ENCODE measurements at regions of chr5 and their contacts with region 1.

Region 1: DNA sequence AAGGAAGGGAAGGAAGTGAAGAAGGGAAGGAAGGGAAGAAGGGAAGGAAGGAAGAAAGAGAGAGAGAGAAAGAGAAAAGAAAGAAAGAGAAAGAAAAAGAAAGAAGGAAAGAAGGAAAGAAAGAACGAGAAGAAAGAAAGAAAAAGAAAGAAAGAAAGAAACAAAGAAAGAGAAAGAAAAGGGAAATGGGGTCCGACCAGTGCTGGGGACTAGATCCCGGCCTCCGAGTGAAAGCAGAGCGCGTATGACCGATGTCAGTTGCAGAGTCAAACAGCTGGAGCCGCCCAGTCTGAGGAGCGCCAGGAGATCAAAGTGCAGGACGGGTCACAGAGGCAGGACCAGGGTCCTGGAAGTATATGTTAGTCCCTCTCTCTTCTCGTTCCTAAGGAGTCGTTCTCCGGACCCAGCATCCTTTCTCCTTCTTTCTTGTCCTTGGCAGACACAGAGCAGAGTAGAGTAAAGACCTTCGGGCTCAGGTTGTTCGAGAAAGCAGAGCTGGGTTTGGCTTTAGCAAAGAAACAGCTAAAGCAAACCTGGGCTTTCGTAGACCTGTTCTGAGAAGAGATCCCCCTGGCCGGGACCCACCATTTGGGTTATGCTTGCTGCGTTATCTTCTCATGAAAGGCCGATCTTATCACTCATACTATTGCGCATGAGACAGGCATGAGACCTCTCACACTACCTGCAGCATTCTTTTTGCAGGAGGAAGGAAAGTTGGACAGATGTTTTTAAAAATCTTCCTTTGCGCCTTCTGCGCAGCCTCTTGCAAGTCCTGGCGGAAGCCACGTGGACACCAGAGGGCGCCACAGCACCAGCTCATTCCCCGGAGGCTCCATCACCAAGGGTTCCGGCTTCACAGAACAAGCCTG is 305.2 kb upstream of the MSX2 start:
- DNase-seq: peak; percentile 87
- H3K4me3 Mint-ChIP-seq: peak overlapping the region; percentile 43
- H3K27ac Mint-ChIP-seq: no peak overlapping the region
- H3K4me1 Mint-ChIP-seq: peaks cover 13% of the 10 kb centered on the region
- H3K27me3 Mint-ChIP-seq: peaks cover 12% of the 10 kb centered on the region
- CTCF ChIP-seq: peak; percentile 93

Region 2: GRCh38 chr5:174409070-174409469 is 10.1 kb before region 1 on chr5:
- CTCF ChIA-PET with region 1: interaction called, 23 read pairs
- POLR2A ChIA-PET with region 1: interaction called, 3 read pairs
- intact Hi-C with region 1: no loop called
- DNase-seq: peak; percentile 20
- H3K4me3 Mint-ChIP-seq: no peak overlapping the region
- H3K27ac Mint-ChIP-seq: no peak overlapping the region
- H3K4me1 Mint-ChIP-seq: peaks cover 20% of the 10 kb centered on the region
- H3K27me3 Mint-ChIP-seq: peaks cover 29% of the 10 kb centered on the region
- CTCF ChIP-seq: no peak

Region 3: DNA sequence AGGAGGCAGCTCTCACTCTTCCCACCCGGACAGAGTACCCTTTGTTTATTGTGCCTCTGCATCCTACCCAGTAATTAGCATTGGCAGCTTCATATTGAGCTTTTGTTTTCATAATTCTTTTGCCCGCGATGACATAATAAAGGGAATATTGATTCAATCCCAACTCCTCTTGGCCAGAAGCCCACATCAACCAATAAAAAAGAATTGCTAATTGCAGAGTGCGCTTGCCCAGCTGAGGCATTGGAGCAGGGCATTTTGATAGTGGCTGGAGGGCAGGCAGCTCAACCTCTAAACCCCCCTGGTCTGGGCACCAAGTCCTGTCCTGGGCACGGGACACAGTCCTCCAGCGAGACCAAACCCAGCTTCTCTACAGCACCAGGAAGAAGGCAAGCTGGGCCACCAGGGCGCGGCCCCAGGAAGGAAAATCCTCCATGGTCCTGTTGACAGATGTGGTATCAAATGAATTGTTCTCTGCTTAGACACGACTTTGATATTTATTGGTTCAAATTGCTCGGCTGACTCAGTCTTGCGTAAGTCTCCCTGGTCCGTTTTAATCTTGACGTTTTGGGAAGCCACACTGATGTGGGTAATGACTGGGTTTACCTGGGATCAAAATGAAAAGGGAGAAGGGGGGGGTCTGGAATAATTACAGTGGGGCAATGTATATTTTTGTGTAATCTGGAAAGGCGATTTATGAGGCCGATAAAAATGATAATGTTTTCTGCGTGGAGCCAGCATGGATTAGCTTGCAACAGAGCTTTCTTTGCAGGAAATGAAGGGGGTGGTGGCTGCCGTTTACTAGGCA is 84.5 kb after region 1 on chr5:
- CTCF ChIA-PET with region 1: interaction called, 3 read pairs
- POLR2A ChIA-PET with region 1: no interaction called
- intact Hi-C with region 1: loop called (anchors 5 kb)
- DNase-seq: peak; percentile 93
- H3K4me3 Mint-ChIP-seq: peak overlapping the region; percentile 58
- H3K27ac Mint-ChIP-seq: peak overlapping the region; percentile 5
- H3K4me1 Mint-ChIP-seq: peaks cover 49% of the 10 kb centered on the region
- H3K27me3 Mint-ChIP-seq: no peaks in the 10 kb centered on the region
- CTCF ChIP-seq: no peak

Region 4: GRCh38 chr5:174724491-174725260 is 305.5 kb after region 1 on chr5 and contains the start of gene MSX2:
- CTCF ChIA-PET with region 1: interaction called, 10 read pairs
- POLR2A ChIA-PET with region 1: interaction called, 4 read pairs
- intact Hi-C with region 1: loop called (anchors 1 kb)
- DNase-seq: peak; percentile 96
- H3K4me3 Mint-ChIP-seq: peak within 1 kb of the TSS; percentile 86
- H3K27ac Mint-ChIP-seq: peak within 1 kb of the TSS; percentile 75
- H3K4me1 Mint-ChIP-seq: peaks cover 17% of the 10 kb centered on the region
- H3K27me3 Mint-ChIP-seq: peaks cover 30% of the 10 kb centered on the region
- CTCF ChIP-seq: no peak
- total RNA-seq, gene MSX2: 4.8 and 5.6 TPM in 2 replicates

Region 5: GRCh38 chr5:174751154-174752000 is 332.2 kb after region 1 on chr5:
- CTCF ChIA-PET with region 1: interaction called, 76 read pairs
- POLR2A ChIA-PET with region 1: interaction called, 4 read pairs
- intact Hi-C with region 1: no loop called
- DNase-seq: peak; percentile 25
- H3K4me3 Mint-ChIP-seq: peak overlapping the region; percentile 74
- H3K27ac Mint-ChIP-seq: no peak overlapping the region
- H3K4me1 Mint-ChIP-seq: peaks cover 5% of the 10 kb centered on the region
- H3K27me3 Mint-ChIP-seq: no peaks in the 10 kb centered on the region
- CTCF ChIP-seq: no peak

Region 6: DNA sequence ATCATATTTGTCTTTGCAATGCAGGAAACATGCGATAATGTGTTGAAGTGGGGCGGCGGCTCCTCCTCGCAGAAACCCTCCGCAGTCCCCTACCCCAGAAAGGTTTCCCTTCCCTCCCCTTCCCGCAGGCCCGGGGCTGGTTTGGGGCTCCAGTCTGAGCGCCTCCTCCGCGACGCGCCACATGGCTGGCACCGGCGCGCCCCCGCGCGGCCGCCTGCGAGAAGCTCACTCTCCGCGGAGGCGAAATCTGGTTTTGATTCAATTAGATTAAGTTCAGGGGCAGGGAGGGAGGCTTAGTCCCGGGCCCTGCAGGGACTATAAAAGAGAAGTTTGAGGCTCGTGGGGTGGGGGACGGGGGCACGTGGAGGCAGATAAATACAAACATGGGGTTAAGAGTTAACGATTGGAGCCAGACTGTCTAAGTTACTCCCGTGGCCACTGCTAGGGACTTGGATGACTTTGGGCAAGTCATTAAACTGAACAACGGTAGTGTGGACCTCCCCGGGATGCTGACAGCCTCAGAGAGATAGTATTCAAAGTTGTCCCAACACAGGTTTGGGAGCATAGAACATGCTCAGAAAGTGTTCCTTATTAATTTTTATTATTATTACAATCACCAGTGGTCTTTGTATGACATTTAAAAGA is 374.6 kb after region 1 on chr5:
- CTCF ChIA-PET with region 1: interaction called, 326 read pairs
- POLR2A ChIA-PET with region 1: interaction called, 10 read pairs
- intact Hi-C with region 1: loop called (anchors 1 kb)
- DNase-seq: peak; percentile 76
- H3K4me3 Mint-ChIP-seq: peak overlapping the region; percentile 4
- H3K27ac Mint-ChIP-seq: no peak overlapping the region
- H3K4me1 Mint-ChIP-seq: peaks cover 5% of the 10 kb centered on the region
- H3K27me3 Mint-ChIP-seq: no peaks in the 10 kb centered on the region
- CTCF ChIP-seq: peak; percentile 99

Measured in MCF 10A (cell line).